OCI-LY7 (cell line): ENCODE measurements at regions of chr6 and their contacts with region 1.

Region 1: GRCh38 chr6:75631859-75632635 is 30.4 kb downstream of the SENP6 start:
- DNase-seq: no peak
- H3K4me3 ChIP-seq: no peak overlapping the region
- H3K27ac ChIP-seq: no peak overlapping the region
- H3K4me1 ChIP-seq: no peaks in the 10 kb centered on the region
- CTCF ChIP-seq: no peak

Region 2: DNA sequence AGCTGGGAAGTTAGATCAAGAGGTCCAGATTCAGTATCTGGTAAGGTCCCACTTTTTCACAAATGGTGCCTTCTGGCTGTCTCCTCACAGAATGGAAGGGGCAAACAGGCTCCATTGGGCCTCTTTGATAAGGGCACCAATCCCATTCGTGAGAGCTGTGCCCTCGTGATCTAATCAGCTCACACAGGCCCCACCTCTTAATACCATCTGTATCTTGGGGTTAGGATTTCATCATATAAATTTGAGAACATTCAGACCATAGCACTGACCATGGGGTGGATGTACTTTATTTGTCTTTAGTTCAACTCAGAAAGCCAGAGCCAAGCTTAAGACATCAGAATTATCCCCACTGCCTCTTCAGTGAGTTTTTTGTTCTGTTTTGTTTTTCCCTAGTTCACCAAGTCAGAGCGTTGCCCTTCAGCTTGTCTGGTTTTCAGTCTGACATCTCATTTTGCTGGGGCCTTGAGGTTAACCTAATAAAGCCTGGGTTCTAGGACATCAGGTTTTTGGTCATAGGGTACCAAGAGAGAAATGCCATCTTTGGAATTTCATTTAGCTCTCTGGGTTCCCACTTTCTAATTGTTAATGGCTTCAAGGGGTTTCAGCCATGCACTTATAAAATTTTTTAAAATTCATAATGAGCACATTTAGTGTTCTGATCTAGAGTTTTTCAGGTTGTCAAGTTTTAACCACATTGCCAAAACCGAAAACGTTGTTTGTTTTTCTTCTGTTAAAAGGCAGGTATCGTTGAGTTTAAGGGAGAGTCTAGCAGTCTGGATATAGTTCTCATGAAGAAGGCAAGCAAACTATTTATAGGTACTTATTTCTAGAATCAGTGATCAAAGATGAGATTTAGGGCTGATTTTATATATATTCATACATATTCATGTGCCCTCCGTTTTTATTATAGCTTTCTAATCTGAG is 11.4 kb before region 1 on chr6:
- CTCF ChIA-PET with region 1: no interaction called
- POLR2A ChIA-PET with region 1: interaction called, 10 read pairs
- intact Hi-C with region 1: no loop called
- DNase-seq: no peak
- H3K4me3 ChIP-seq: no peak overlapping the region
- H3K27ac ChIP-seq: no peak overlapping the region
- H3K4me1 ChIP-seq: no peaks in the 10 kb centered on the region
- CTCF ChIP-seq: no peak

Region 3: DNA sequence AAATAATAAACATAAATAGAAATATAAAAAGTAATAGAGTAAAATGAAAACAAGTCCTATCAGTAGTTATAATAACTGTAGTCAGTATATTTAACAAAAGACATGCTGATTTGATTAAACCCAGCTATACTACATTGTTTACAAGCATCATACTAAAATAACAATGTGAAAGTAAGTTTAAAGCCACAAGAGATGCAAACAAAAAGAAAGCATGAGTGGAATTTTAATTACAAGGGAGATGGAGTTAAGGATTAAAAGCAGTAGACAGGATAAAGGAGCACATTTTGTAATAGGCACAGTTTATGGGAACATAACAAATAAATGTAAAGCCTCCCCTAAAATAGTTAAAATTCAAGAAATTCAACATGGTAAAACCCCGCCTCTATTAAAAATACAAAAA is 11.1 kb after region 1 on chr6:
- CTCF ChIA-PET with region 1: no interaction called
- POLR2A ChIA-PET with region 1: interaction called, 10 read pairs
- intact Hi-C with region 1: no loop called
- DNase-seq: no peak
- H3K4me3 ChIP-seq: no peak overlapping the region
- H3K27ac ChIP-seq: no peak overlapping the region
- H3K4me1 ChIP-seq: no peaks in the 10 kb centered on the region
- CTCF ChIP-seq: no peak

Region 4: GRCh38 chr6:75934643-75935472 is 302.8 kb after region 1 on chr6:
- CTCF ChIA-PET with region 1: no interaction called
- POLR2A ChIA-PET with region 1: no interaction called
- intact Hi-C with region 1: no loop called
- DNase-seq: peak; percentile 61
- H3K4me3 ChIP-seq: no peak overlapping the region
- H3K27ac ChIP-seq: no peak overlapping the region
- H3K4me1 ChIP-seq: no peaks in the 10 kb centered on the region
- CTCF ChIP-seq: peak; percentile 88